Mammary epithelial cell (primary cell): ENCODE measurements at regions of chr2 and their contacts with region 1.

Region 1: DNA sequence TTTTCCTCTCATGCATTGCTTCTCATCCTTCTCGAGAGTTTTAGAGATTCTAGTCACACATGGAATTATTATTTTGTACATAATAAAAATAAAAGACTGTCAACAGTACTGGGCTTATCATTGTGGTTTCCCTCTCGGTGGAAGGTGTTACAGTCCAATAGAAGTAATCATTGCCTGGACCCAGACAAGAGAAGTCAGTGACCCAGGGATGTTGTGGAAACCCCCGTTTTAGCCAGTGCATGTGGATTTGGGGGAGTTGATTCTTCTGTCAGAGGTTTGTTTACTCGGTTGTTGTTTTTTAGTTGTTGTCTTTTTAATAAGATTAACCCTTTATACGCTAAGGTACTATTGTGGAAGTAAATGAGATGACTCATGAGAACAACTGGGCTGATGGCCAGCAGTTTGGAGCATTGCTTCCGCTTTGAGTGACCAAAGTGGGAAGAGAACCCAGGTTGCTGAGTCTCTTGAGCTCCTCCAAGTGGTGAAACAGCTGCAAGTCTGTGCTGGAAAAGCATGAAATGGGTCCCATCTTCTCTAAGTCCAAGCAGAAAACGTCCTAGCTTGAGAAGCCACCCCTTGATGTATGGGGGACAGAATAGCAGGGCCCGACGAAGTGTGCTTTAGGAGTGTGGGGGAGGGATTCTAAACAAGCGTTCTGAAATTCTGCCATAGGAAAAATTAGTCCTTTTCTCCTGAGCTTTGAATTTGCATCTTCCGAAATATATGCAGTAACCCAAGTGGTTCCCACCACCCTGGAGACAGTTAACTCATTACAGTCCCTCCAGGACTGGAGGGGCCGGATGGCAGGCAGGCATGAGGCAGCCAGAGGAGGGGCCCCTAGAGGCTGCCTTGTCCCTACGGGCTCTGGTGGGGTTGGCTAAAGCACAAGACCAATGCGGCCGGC is 61.8 kb upstream of the GPR45 start:
- DNase-seq: peak; percentile 63
- H3K4me3 ChIP-seq: no peak overlapping the region
- H3K27ac ChIP-seq: no peak overlapping the region
- H3K4me1 ChIP-seq: no peaks in the 10 kb centered on the region
- H3K27me3 ChIP-seq: peaks cover 1% of the 10 kb centered on the region
- CTCF ChIP-seq: peak; percentile 47 to 81

Region 2: GRCh38 chr2:105114551-105114950 is 65.2 kb before region 1 on chr2:
- CTCF ChIA-PET with region 1: interaction called, 4 read pairs
- dilution Hi-C with region 1: no loop called
- in situ Hi-C with region 1: no loop called
- intact Hi-C with region 1: loop called (anchors 1 kb)
- DNase-seq: peak; percentile 14
- H3K4me3 ChIP-seq: no peak overlapping the region
- H3K27ac ChIP-seq: no peak overlapping the region
- H3K4me1 ChIP-seq: no peaks in the 10 kb centered on the region
- H3K27me3 ChIP-seq: no peaks in the 10 kb centered on the region
- CTCF ChIP-seq: peak; percentile 64 to 73

Region 3: GRCh38 chr2:105143467-105144151 is 36.1 kb before region 1 on chr2:
- CTCF ChIA-PET with region 1: no interaction called
- dilution Hi-C with region 1: no loop called
- in situ Hi-C with region 1: no loop called
- intact Hi-C with region 1: loop called (anchors 5 kb)
- DNase-seq: peak; percentile 65
- H3K4me3 ChIP-seq: peak overlapping the region; percentile 54 to 86 (median 62)
- H3K27ac ChIP-seq: no peak overlapping the region
- H3K4me1 ChIP-seq: no peaks in the 10 kb centered on the region
- H3K27me3 ChIP-seq: peaks cover 1% of the 10 kb centered on the region
- CTCF ChIP-seq: no peak